Activated CD4-positive, alpha-beta memory T cell treated with anti-CD3 and anti-CD28 coated beads for 36 hours (primary cell): ENCODE measurements at regions of chr5 and their contacts with region 1.

Region 1: GRCh38 chr5:103139264-103139865 is 19.3 kb downstream of the PPIP5K2 start:
- DNase-seq: peak; percentile 85
- H3K4me3 Mint-ChIP-seq: no peak overlapping the region
- H3K27ac Mint-ChIP-seq: no peak overlapping the region
- H3K4me1 Mint-ChIP-seq: peaks cover 5% of the 10 kb centered on the region
- H3K27me3 Mint-ChIP-seq: no peaks in the 10 kb centered on the region

Region 2: GRCh38 chr5:102536323-102536928 is 602.9 kb before region 1 on chr5:
- CTCF ChIA-PET with region 1: interaction called, 11 read pairs
- POLR2A ChIA-PET with region 1: no interaction called
- intact Hi-C with region 1: loop called (anchors 1 kb)
- DNase-seq: no peak
- H3K4me3 Mint-ChIP-seq: no peak overlapping the region
- H3K27ac Mint-ChIP-seq: no peak overlapping the region
- H3K4me1 Mint-ChIP-seq: no peaks in the 10 kb centered on the region
- H3K27me3 Mint-ChIP-seq: peaks cover 6% of the 10 kb centered on the region

Region 3: GRCh38 chr5:102583276-102584124 is 555.9 kb before region 1 on chr5:
- CTCF ChIA-PET with region 1: interaction called, 11 read pairs
- POLR2A ChIA-PET with region 1: no interaction called
- intact Hi-C with region 1: loop called (anchors 2 kb)
- DNase-seq: no peak
- H3K4me3 Mint-ChIP-seq: no peak overlapping the region
- H3K27ac Mint-ChIP-seq: no peak overlapping the region
- H3K4me1 Mint-ChIP-seq: peaks cover 1% of the 10 kb centered on the region
- H3K27me3 Mint-ChIP-seq: peaks cover 8% of the 10 kb centered on the region

Region 4: GRCh38 chr5:102681407-102681983 is 457.9 kb before region 1 on chr5:
- CTCF ChIA-PET with region 1: interaction called, 27 read pairs
- POLR2A ChIA-PET with region 1: no interaction called
- intact Hi-C with region 1: loop called (anchors 1 kb)
- DNase-seq: peak; percentile 76
- H3K4me3 Mint-ChIP-seq: no peak overlapping the region
- H3K27ac Mint-ChIP-seq: no peak overlapping the region
- H3K4me1 Mint-ChIP-seq: no peaks in the 10 kb centered on the region
- H3K27me3 Mint-ChIP-seq: no peaks in the 10 kb centered on the region

Region 5: DNA sequence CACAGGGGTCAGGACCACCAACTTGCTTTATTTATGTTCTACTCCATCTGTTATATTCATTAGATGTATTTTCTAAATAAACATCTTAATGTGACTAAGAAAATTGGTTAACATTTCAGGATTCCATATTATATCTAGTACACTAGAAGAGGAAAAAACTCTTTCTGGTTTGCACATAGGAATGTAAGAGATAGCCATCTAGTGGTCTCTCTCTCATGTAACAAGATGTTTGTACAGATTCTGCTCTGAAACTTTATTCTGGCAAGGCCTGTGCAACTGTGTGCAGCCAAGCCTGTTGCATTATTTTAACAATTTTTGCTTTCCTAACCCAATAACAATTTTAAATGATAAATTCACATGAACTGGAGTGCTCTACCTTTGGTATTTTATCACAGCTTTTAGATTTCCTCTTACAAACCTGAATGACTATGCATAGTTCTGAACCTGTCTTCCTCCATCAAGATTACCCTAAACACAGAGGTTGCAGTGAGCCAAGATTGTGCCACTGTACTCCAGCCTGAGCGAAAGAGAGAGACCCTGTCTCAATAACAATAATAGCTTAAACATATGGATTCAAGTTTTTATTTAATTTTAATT is 167.6 kb before region 1 on chr5:
- CTCF ChIA-PET with region 1: interaction called, 3 read pairs
- POLR2A ChIA-PET with region 1: no interaction called
- intact Hi-C with region 1: loop called (anchors 2 kb)
- DNase-seq: no peak
- H3K4me3 Mint-ChIP-seq: no peak overlapping the region
- H3K27ac Mint-ChIP-seq: no peak overlapping the region
- H3K4me1 Mint-ChIP-seq: no peaks in the 10 kb centered on the region
- H3K27me3 Mint-ChIP-seq: no peaks in the 10 kb centered on the region

Region 6: DNA sequence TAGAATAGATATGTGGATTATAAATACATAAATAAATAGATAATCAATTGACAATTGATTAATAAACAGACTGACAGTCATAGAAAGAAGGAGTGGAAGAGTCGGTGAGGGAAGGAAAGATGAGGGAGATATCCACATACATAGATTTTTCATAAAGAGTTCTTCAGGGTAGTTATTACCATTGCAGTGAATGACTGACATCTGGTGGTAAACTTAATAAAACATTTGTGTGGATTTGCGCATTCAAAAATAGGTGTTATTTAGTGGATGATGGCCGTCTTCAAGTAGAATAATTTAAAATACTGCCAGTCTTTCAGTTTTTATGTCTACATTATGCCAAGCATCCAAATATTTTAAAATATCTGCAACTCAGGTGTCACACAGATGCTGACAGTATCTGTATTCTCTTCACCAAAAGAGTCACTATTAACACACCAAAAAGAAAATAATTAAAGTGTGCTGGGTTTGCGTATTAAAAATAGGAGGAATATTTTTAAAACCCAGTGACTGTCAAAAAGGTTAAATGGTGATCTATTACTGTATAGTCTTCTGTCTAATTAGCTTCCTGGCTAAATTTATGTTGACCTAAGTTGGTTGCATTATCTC is 98.2 kb before region 1 on chr5:
- CTCF ChIA-PET with region 1: interaction called, 3 read pairs
- POLR2A ChIA-PET with region 1: no interaction called
- intact Hi-C with region 1: loop called (anchors 2 kb)
- DNase-seq: no peak
- H3K4me3 Mint-ChIP-seq: no peak overlapping the region
- H3K27ac Mint-ChIP-seq: no peak overlapping the region
- H3K4me1 Mint-ChIP-seq: no peaks in the 10 kb centered on the region
- H3K27me3 Mint-ChIP-seq: peaks cover 2% of the 10 kb centered on the region

Region 7: GRCh38 chr5:103119765-103120606 is 19.4 kb before region 1 on chr5 and contains the starts of genes GIN1 and PPIP5K2:
- CTCF ChIA-PET with region 1: interaction called, 11 read pairs
- POLR2A ChIA-PET with region 1: no interaction called
- intact Hi-C with region 1: loop called (anchors 2 kb)
- DNase-seq: peak; percentile 99
- H3K4me3 Mint-ChIP-seq: peak within 1 kb of the TSS; percentile 88
- H3K27ac Mint-ChIP-seq: peak within 1 kb of the TSS; percentile 99
- H3K4me1 Mint-ChIP-seq: peaks cover 40% of the 10 kb centered on the region
- H3K27me3 Mint-ChIP-seq: no peaks in the 10 kb centered on the region
- total RNA-seq, gene GIN1: 9.7 to 10.7 TPM
- total RNA-seq, gene PPIP5K2: 40.6 to 44.4 TPM

Region 8: GRCh38 chr5:103211576-103212561 is 72.5 kb after region 1 on chr5:
- CTCF ChIA-PET with region 1: no interaction called
- POLR2A ChIA-PET with region 1: no interaction called
- intact Hi-C with region 1: no loop called
- DNase-seq: no peak
- H3K4me3 Mint-ChIP-seq: no peak overlapping the region
- H3K27ac Mint-ChIP-seq: no peak overlapping the region
- H3K4me1 Mint-ChIP-seq: peaks cover 22% of the 10 kb centered on the region
- H3K27me3 Mint-ChIP-seq: no peaks in the 10 kb centered on the region